Breast epithelium (tissue), 4 donors: ENCODE measurements at regions of chr6 and their contacts with region 1.

Region 1: GRCh38 chr6:138654715-138655634 is 118.6 kb upstream of the CCDC28A start:
- DNase-seq: no peak
- H3K4me3 ChIP-seq: no peak overlapping the region
- H3K27ac ChIP-seq: peak overlapping the region in 1 of 2 donors; percentile 48
- H3K4me1 ChIP-seq: peaks cover 0 to 6% of the 10 kb centered on the region in 2 donors
- H3K27me3 ChIP-seq: no peaks in the 10 kb centered on the region
- CTCF ChIP-seq: no peak
- POLR2A ChIP-seq: no peak

Region 2: GRCh38 chr6:138142806-138143205 is 512.2 kb before region 1 on chr6:
- intact Hi-C with region 1: loop called (anchors 5 kb)
- DNase-seq: no peak
- H3K4me3 ChIP-seq: no peak overlapping the region
- H3K27ac ChIP-seq: no peak overlapping the region
- H3K4me1 ChIP-seq: no peaks in the 10 kb centered on the region
- H3K27me3 ChIP-seq: no peaks in the 10 kb centered on the region
- CTCF ChIP-seq: no peak
- POLR2A ChIP-seq: no peak